Heart left ventricle (tissue), 16 donors: ENCODE measurements at regions of chr10 and their contacts with region 1.

Region 1: GRCh38 chr10:90935581-90936275 is 14.8 kb upstream of the ANKRD1 start:
- DNase-seq: peak in 1 of 5 donors; percentile 56
- ATAC-seq: peak in 3 of 4 donors; percentile 43 to 56 (median 45)
- H3K4me3 ChIP-seq: no peak overlapping the region
- H3K27ac ChIP-seq: peak overlapping the region in 9 of 12 donors; percentile 16 to 71 (median 42)
- H3K4me1 ChIP-seq: peaks cover 0 to 30% (median 12%) of the 10 kb centered on the region in 12 donors
- H3K27me3 ChIP-seq: no peaks in the 10 kb centered on the region
- CTCF ChIP-seq: no peak
- POLR2A ChIP-seq: no peak

Region 2: DNA sequence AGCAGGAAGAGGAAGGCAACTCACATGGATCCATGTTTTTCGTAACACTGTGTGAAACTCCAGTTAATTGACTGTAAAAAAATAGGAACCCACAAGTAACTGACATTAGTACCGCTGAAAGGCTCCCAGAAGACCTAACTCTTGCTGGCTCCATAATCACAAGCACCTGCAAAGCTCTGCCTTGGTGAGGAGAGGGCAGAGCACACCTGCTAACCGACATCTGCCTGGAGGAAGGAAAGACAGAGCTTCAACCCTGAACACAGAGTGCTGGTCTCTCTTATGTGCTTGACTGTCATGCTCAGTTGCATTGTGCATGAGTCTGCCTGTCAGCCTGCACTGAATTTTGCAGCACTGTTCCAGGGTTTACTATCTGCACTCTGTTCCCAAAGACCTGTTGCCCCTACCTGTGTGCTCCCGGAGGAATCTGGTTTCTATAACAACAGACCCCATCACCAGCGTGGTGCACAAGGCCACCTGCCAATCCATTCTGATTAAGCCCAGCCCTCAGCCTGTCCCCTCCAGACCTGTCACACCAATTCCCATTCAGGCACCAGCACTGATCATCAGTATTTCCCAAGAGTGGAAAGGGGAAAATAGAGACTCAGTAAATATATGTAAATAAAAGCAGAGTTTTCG is 48.3 kb after region 1 on chr10:
- intact Hi-C with region 1: loop called in 2 of 10 experiments (anchors 5 kb)
- DNase-seq: no peak
- ATAC-seq: no peak
- H3K4me3 ChIP-seq: no peak overlapping the region
- H3K27ac ChIP-seq: peak overlapping the region in 8 of 12 donors; percentile 72 to 89 (median 82)
- H3K4me1 ChIP-seq: peaks cover 0 to 37% (median 14%) of the 10 kb centered on the region in 12 donors
- H3K27me3 ChIP-seq: no peaks in the 10 kb centered on the region
- CTCF ChIP-seq: no peak
- POLR2A ChIP-seq: no peak